ENCODE measurements at regions of chr15 and their contacts with region 1.

Region 1: GRCh38 chr15:40893733-40894688 is at the start of gene VPS18:
- DNase-seq: peak; percentile 84 to 97
- H3K4me3 ChIP-seq: peak within 1 kb of the TSS; percentile 94
- H3K27ac ChIP-seq: peak within 1 kb of the TSS; percentile 73
- H3K4me1 ChIP-seq: peaks cover 20% of the 10 kb centered on the region
- H3K27me3 ChIP-seq: no peaks in the 10 kb centered on the region
- CTCF ChIP-seq: peak; percentile 80
- total RNA-seq, gene VPS18: 9.6 and 9.9 TPM in 2 replicates

Region 2: GRCh38 chr15:40274350-40275274 is 619.4 kb before region 1 on chr15:
- CTCF ChIA-PET with region 1: no interaction called
- POLR2A ChIA-PET with region 1: no interaction called
- intact Hi-C with region 1: loop called (anchors 5 kb)
- DNase-seq: peak; percentile 55 to 83
- H3K4me3 ChIP-seq: no peak overlapping the region
- H3K27ac ChIP-seq: no peak overlapping the region
- H3K4me1 ChIP-seq: no peaks in the 10 kb centered on the region
- H3K27me3 ChIP-seq: no peaks in the 10 kb centered on the region
- CTCF ChIP-seq: peak; percentile 99

Region 3: DNA sequence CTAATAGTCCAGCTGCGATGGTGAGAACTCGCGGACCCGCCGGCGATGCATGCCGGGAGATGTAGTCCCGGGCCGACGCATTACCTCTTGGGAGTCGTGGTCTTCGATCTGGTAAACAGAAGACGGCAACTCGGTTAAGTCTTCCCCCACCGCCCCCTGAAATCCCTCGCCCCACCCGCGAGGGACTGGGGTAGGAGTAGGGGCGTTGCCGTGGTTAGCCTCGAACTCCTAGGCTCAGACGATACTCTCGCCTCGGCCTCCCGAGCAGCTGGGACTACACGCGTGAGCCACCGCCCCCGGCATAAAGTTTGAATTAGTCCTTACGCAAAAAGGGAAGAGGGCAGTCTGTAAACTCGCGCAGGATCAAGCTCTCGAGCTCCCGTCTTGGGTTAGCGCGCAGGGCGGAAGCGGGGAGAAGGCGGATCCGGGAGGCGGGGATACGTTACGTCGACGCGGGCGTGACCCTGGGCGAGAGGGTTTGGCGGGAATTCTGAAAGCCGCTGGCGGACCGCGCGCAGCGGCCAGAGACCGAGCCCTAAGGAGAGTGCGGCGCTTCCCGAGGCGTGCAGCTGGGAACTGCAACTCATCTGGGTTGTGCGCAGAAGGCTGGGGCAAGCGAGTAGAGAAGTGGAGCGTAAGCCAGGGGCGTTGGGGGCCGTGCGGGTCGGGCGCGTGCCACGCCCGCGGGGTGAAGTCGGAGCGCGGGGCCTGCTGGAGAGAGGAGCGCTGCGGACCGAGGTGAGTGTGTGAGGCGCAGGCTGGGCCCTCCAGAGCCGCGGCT is 199.1 kb before region 1 on chr15 and contains the start of gene RAD51:
- CTCF ChIA-PET with region 1: no interaction called
- POLR2A ChIA-PET with region 1: interaction called, 17 read pairs
- intact Hi-C with region 1: no loop called
- DNase-seq: peak; percentile 83 to 90
- H3K4me3 ChIP-seq: peak within 1 kb of the TSS; percentile 88
- H3K27ac ChIP-seq: peak within 1 kb of the TSS; percentile 78
- H3K4me1 ChIP-seq: peaks cover 19% of the 10 kb centered on the region
- H3K27me3 ChIP-seq: no peaks in the 10 kb centered on the region
- CTCF ChIP-seq: no peak
- total RNA-seq, gene RAD51: 19.8 and 22.5 TPM in 2 replicates

Region 4: GRCh38 chr15:40754883-40755811 is 138.9 kb before region 1 on chr15 and contains the start of gene RMDN3:
- CTCF ChIA-PET with region 1: no interaction called
- POLR2A ChIA-PET with region 1: no interaction called
- intact Hi-C with region 1: loop called (anchors 2 kb)
- DNase-seq: peak; percentile 73 to 92
- H3K4me3 ChIP-seq: peak within 1 kb of the TSS; percentile 93
- H3K27ac ChIP-seq: peak within 1 kb of the TSS; percentile 59
- H3K4me1 ChIP-seq: peaks cover 12% of the 10 kb centered on the region; the same call in 1 of the 2 replicates
- H3K27me3 ChIP-seq: no peaks in the 10 kb centered on the region
- CTCF ChIP-seq: no peak
- total RNA-seq, gene RMDN3: 15.7 and 19.8 TPM in 2 replicates

Region 5: DNA sequence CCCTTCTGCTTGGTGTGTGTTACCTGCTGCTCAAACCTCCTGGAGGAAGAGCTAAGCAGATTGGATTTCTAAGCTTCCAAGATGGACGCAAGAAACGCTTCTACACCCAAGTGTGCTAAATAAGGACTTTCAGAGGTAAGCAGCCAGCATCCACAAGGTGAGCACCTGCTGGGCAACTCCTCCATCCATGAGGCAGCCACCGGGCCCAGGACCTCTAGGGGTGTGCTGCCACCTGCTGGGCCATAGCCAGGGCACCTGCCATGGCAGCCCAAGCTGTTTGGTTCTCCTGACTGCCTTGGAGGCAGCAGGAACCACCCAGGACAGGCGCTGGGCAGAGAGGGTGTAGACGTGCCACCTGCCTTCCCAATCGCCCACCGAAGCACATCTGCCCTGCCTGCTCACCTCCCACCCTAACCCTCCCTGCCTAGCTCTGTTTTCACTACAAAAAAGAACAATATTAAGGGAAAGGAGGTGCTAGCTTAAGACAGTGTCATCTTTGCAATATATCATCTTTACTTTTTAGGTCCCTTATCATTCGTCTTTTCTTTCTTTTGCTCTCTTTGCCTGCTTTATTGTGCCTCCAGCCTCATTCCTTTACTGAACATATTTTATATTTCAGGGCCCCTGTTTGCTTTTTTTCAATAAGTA is 111.3 kb before region 1 on chr15:
- CTCF ChIA-PET with region 1: interaction called, 7 read pairs
- POLR2A ChIA-PET with region 1: interaction called, 4 read pairs
- intact Hi-C with region 1: loop called (anchors 1 kb)
- DNase-seq: peak; percentile 73 to 85
- H3K4me3 ChIP-seq: no peak overlapping the region
- H3K27ac ChIP-seq: no peak overlapping the region
- H3K4me1 ChIP-seq: peaks cover 35% of the 10 kb centered on the region
- H3K27me3 ChIP-seq: no peaks in the 10 kb centered on the region
- CTCF ChIP-seq: peak; percentile 79

Region 6: DNA sequence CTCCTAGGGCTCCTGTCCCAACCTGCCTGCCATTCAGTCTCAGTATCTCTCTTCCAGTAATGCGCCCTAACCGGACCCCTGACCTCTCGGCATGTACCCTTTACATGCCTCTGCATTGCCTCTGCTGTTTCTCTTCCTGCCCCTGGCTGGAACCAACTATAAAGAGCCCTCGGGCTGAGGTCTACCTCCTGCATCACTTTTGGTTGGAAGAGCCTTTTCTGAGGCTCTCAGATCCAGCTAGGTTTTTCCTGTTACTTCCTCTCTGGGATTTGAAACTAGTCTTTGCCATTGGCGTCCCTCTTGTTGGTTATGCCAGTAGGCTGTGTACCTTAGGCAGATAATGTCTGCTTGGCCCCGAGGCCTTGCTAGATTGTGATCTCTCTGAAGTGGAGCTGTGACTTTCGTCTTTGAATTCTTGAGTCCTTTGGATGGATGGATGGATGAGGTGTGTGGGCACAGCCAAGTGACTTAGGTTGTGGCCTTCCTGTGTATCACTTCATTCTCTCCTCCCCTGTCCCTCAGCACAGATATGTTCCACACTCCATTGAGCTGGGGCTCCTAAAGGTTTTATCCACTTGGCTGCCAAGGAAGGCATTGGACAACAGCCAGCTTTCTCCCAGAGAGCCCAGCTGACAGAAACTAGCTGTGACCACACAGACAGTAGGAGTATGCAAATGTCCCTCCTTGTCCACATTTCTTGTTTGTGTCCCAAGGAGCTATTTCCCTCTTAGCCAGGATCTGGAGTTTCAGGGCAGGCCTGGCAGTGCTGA is 78.9 kb before region 1 on chr15:
- CTCF ChIA-PET with region 1: interaction called, 10 read pairs
- POLR2A ChIA-PET with region 1: no interaction called
- intact Hi-C with region 1: no loop called
- DNase-seq: no peak
- H3K4me3 ChIP-seq: no peak overlapping the region
- H3K27ac ChIP-seq: no peak overlapping the region
- H3K4me1 ChIP-seq: no peaks in the 10 kb centered on the region
- H3K27me3 ChIP-seq: no peaks in the 10 kb centered on the region
- CTCF ChIP-seq: no peak

Region 7: GRCh38 chr15:40857601-40858341 is 36.2 kb before region 1 on chr15:
- CTCF ChIA-PET with region 1: interaction called, 84 read pairs
- POLR2A ChIA-PET with region 1: no interaction called
- intact Hi-C with region 1: loop called (anchors 1 kb)
- DNase-seq: peak; percentile 85 to 95
- H3K4me3 ChIP-seq: no peak overlapping the region
- H3K27ac ChIP-seq: peak overlapping the region; percentile 89
- H3K4me1 ChIP-seq: peaks cover 36% of the 10 kb centered on the region
- H3K27me3 ChIP-seq: no peaks in the 10 kb centered on the region
- CTCF ChIP-seq: peak; percentile 87

Region 8: GRCh38 chr15:40941528-40942336 is 47.7 kb after region 1 on chr15:
- CTCF ChIA-PET with region 1: no interaction called
- POLR2A ChIA-PET with region 1: no interaction called
- intact Hi-C with region 1: no loop called
- DNase-seq: peak; percentile 55 to 82
- H3K4me3 ChIP-seq: peak overlapping the region; percentile 64; the same call in 1 of the 2 replicates
- H3K27ac ChIP-seq: peak overlapping the region; percentile 32; the same call in 1 of the 2 replicates
- H3K4me1 ChIP-seq: 0 out of 2 replicates have a peak, but pooled peaks cover 6% of the 10 kb centered on the region
- H3K27me3 ChIP-seq: no peaks in the 10 kb centered on the region
- CTCF ChIP-seq: peak; percentile 36; the same call in 1 of the 2 replicates

Measured in PC-9 (cell line).